Activated T-helper 1 cell treated with anti-CD3 and anti-CD28 coated beads, Interleukin-12 subunit alpha, Interleukin-12 subunit beta, Interleukin-2, Interleukin-4 antibody, amounts not matched to agents 30 ng/mL and 10 ng/mL and 1 ng/mL, durations not matched to agents 14 hours and 24 hours and 36 hours (primary cell): ENCODE measurements at regions of chr10 and their contacts with region 1.

Region 1: DNA sequence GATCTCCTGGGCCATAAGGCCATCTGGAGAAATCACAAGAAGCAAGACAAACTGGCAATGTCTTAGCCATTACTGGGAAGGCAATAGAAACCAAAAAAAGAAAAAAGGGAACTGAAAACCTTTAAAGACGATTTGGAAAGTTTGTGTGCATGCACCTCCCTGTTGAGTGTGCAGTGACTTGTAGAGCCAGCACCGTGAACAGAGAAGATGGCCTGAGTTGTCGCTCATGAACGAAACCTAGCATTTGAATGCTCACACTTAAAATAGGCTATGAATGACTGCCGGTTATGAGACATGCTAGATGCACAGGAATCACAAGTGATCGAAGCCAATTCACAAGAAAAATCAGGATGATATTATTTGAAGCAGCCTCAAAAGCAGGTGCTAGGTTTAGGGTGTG is 151.3 kb upstream of the ADO start:
- DNase-seq: no peak
- H3K4me3 Mint-ChIP-seq: no peak overlapping the region
- H3K27ac Mint-ChIP-seq: peak overlapping the region; percentile 6
- H3K4me1 Mint-ChIP-seq: peaks cover 50% of the 10 kb centered on the region
- H3K27me3 Mint-ChIP-seq: no peaks in the 10 kb centered on the region

Region 2: GRCh38 chr10:62153191-62153590 is 500.1 kb before region 1 on chr10:
- intact Hi-C with region 1: no loop called
- DNase-seq: no peak
- H3K4me3 Mint-ChIP-seq: no peak overlapping the region
- H3K27ac Mint-ChIP-seq: no peak overlapping the region
- H3K4me1 Mint-ChIP-seq: no peaks in the 10 kb centered on the region
- H3K27me3 Mint-ChIP-seq: no peaks in the 10 kb centered on the region

Region 3: GRCh38 chr10:62502995-62503613 is 150.2 kb before region 1 on chr10:
- intact Hi-C with region 1: no loop called
- DNase-seq: no peak
- H3K4me3 Mint-ChIP-seq: no peak overlapping the region
- H3K27ac Mint-ChIP-seq: no peak overlapping the region
- H3K4me1 Mint-ChIP-seq: no peaks in the 10 kb centered on the region
- H3K27me3 Mint-ChIP-seq: peaks cover 14% of the 10 kb centered on the region

Region 4: DNA sequence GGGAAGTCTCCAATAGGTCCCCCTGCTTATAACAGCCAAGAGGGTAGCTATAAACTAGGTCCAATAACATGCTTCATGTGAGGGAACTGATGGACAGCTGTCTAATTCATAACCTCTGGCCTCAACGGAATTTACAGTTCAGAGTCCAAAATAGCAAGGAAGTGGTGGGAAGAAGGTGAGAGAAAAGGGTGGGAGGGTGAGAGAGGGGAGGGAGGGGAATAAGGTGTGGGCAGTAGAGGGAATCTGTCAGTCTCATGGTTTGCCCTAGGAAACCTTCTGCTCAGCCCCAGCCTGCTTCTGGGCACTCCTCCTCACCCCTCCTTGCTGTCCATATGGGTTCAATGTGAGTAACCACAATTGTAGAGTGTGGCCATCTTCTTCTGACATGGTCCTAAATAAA is 17.9 kb after region 1 on chr10:
- intact Hi-C with region 1: loop called (anchors 2 kb)
- DNase-seq: no peak
- H3K4me3 Mint-ChIP-seq: no peak overlapping the region
- H3K27ac Mint-ChIP-seq: peak overlapping the region; percentile 76
- H3K4me1 Mint-ChIP-seq: peaks cover 39% of the 10 kb centered on the region
- H3K27me3 Mint-ChIP-seq: no peaks in the 10 kb centered on the region

Region 5: DNA sequence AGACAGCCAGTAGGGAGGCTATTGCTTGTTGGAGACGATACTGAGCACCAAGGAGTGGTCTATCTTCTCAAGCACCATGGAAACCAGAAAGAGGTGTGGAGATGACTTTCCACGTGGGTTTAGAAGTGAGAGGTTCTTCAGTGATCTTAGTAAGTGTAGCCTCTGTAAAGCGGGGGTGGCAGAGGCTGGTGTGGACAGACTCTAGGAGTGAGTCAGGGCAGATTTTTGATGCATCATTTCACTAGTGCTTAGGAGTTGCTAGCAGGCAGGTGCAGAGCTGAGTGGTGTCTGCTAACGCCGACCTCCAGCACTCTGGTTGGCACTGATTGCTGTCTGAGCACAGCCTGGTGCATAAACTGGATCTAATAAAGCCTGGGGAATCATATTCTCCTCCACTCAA is 72.9 kb after region 1 on chr10:
- intact Hi-C with region 1: no loop called
- DNase-seq: peak; percentile 16
- H3K4me3 Mint-ChIP-seq: peak overlapping the region; percentile 25
- H3K27ac Mint-ChIP-seq: peak overlapping the region; percentile 72
- H3K4me1 Mint-ChIP-seq: peaks cover 52% of the 10 kb centered on the region
- H3K27me3 Mint-ChIP-seq: peaks cover 8% of the 10 kb centered on the region

Region 6: DNA sequence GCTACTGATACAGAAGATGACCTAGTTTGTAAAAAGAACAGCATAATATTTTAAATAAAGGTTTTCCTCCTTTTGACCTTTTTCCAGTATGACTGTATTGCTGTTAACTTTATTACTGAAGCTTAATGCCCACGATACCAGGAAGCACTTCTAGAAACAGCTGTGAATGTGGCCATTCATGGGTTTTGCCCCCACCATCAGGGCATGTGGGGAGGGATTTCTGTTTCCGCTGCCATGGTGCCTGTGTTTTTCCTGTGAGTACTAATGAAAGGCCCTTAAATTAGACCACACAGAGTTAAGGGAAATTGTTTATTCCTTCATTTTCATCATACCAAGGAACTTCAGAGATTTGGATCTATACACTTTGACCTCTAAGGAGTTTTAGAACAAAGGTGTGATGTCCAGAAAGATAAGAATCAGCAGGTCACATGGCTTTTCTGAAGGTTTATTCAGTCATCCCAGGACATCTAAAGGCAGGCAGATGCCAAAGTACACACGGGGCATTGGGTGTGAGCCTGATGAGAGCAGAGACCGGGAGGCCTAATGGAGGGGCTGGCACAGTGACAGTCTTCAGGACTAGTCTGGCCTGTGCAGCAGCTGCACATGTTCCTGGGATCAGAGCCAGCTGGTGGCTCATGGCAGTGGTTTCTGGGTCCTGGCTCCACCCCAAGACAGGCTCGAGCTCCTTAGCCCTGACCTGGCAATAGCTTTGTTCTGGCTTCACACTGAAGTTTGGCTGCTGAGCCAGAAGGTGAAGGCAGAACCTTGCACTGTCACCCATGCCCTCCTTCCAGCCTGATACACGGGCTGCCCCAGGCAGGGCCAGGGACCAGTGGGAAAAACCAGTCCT is 1058.8 kb after region 1 on chr10:
- intact Hi-C with region 1: no loop called
- DNase-seq: no peak
- H3K4me3 Mint-ChIP-seq: no peak overlapping the region
- H3K27ac Mint-ChIP-seq: no peak overlapping the region
- H3K4me1 Mint-ChIP-seq: peaks cover 30% of the 10 kb centered on the region
- H3K27me3 Mint-ChIP-seq: peaks cover 1% of the 10 kb centered on the region